ENCODE measurements at regions of chr17 and their contacts with region 1.

Region 1: GRCh38 chr17:42200702-42201101 is 6.4 kb upstream of the GHDC start:
- DNase-seq: peak; percentile 40 to 93 (median 60)

Region 2: GRCh38 chr17:42287926-42288802 is 87.5 kb after region 1 on chr17 and contains the start of gene STAT5A:
- intact Hi-C with region 1: loop called (anchors 10 kb)
- DNase-seq: peak in 9 of 10 donors; percentile 59 to 96 (median 72)

Region 3: DNA sequence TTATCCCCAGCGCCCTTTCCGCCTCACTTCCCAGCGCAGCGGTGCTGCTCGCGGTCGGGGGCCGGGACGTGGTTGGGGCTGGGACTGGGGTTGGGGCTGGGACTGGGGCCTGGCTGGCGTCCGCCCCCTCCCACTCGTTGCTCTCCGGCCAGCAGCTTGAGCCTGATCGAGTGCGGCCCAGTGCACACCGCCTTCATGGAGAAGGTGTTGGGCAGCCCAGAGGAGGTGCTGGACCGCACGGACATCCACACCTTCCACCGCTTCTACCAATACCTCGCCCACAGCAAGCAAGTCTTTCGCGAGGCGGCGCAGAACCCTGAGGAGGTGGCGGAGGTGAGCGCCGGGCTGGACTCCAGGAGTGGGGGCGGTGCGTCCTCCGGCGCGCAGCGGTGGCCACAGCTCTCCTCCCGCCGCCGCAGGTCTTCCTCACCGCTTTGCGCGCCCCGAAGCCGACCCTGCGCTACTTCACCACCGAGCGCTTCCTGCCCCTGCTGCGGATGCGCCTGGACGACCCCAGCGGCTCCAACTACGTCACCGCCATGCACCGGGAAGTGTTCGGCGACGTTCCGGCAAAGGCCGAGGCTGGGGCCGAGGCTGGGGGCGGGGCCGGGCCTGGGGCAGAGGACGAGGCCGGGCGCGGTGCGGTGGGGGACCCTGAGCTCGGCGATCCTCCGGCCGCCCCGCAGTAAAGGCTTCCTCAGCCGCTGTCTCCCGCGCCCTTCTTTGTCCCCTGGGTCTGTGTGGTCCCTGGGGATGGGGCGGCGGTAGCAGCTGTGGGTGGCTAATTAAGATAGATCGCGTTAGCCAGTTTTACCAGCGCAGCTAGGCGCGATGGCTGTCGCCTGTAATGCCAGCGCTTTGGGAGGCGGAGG is 353.8 kb after region 1 on chr17:
- intact Hi-C with region 1: no loop called
- DNase-seq: peak; percentile 82 to 98 (median 92)

Measured in posterior cingulate gyrus (tissue), 11 donors.